Left cardiac atrium (tissue), 4 donors: ENCODE measurements at regions of chr1 and their contacts with region 1.

Region 1: GRCh38 chr1:177959811-177960515 is 9.9 kb downstream of the SEC16B start:
- DNase-seq: no peak
- ATAC-seq: peak; percentile 41 to 47

Region 2: GRCh38 chr1:178004926-178005391 is 45.0 kb after region 1 on chr1:
- intact Hi-C with region 1: no loop called
- DNase-seq: no peak
- ATAC-seq: no peak

Region 3: DNA sequence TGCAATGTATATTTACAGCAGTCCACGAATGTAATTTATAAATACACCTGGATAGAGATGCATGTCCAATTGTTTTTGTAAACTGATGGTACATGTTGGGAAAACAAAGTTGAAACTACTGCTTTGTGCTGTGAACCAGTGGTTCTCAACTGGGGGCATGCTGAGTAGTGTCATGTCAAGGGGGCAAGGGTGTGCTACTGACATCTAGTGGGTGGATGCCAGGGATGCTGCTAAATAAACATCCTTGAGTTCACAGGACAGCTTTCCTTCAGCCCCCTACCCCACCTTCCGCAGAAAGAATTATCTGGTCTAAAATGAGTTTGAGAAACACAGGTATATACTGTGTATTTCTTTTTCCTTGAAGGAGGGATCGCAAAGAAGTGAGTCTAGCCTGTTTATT is 229.9 kb after region 1 on chr1:
- intact Hi-C with region 1: loop called in 1 of 2 experiments (anchors 10 kb)
- DNase-seq: peak; percentile 31
- ATAC-seq: peak in 1 of 2 donors; percentile 63

Region 4: DNA sequence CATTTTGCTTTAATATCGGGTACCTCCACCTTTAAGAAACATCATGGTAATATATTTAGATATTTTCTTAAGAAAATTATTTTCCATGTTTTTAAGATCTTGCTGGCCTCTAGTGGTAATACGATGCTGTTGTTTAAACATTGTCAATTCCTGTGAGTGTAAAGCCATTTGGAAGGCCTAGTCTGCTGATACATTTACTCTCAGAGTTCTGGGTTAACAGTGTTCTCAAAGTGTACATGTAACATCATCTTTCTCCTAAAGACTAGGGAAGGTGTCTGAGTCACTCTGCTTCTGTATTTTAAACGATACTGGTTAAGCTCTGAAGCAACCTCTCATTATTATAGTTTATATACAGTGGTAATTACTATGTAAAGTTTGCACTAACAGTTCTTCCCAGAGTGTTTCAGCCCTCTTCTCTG is 323.0 kb after region 1 on chr1:
- intact Hi-C with region 1: loop called in 1 of 2 experiments (anchors 10 kb)
- DNase-seq: no peak
- ATAC-seq: peak; percentile 27 to 36